ENCODE measurements at regions of chr6 and their contacts with region 1.

Region 1: GRCh38 chr6:116314878-116315277 is 35.1 kb upstream of the TSPYL1 start:
- DNase-seq: peak; percentile 23
- ATAC-seq: no peak
- H3K4me3 ChIP-seq: no peak overlapping the region
- H3K4me3 Mint-ChIP-seq: no peak overlapping the region
- H3K27ac ChIP-seq: no peak overlapping the region
- H3K27ac Mint-ChIP-seq: no peak overlapping the region
- H3K4me1 ChIP-seq: peaks cover 9% of the 10 kb centered on the region in 2 donors
- H3K4me1 Mint-ChIP-seq: peaks cover 7% of the 10 kb centered on the region
- H3K27me3 ChIP-seq: no peaks in the 10 kb centered on the region
- H3K27me3 Mint-ChIP-seq: no peaks in the 10 kb centered on the region
- CTCF ChIP-seq: no peak

Region 2: GRCh38 chr6:116359131-116359530 is 44.3 kb after region 1 on chr6:
- CTCF ChIA-PET with region 1: no interaction called
- POLR2A ChIA-PET with region 1: no interaction called
- intact Hi-C with region 1: loop called (anchors 5 kb)
- DNase-seq: no peak
- ATAC-seq: no peak
- H3K4me3 ChIP-seq: no peak overlapping the region
- H3K4me3 Mint-ChIP-seq: no peak overlapping the region
- H3K27ac ChIP-seq: no peak overlapping the region
- H3K27ac Mint-ChIP-seq: no peak overlapping the region
- H3K4me1 ChIP-seq: peaks cover 0 to 6% of the 10 kb centered on the region in 2 donors
- H3K4me1 Mint-ChIP-seq: peaks cover 3% of the 10 kb centered on the region
- H3K27me3 ChIP-seq: no peaks in the 10 kb centered on the region
- H3K27me3 Mint-ChIP-seq: no peaks in the 10 kb centered on the region
- CTCF ChIP-seq: no peak